Esophagus muscularis mucosa (tissue), 4 donors: ENCODE measurements at regions of chr5 and their contacts with region 1.

Region 1: GRCh38 chr5:67693956-67694809 is 497.6 kb upstream of the CD180 start:
- DNase-seq: peak; percentile 97
- H3K4me3 ChIP-seq: no peak overlapping the region
- H3K27ac ChIP-seq: peak overlapping the region; percentile 85 to 92 (median 87)
- H3K4me1 ChIP-seq: peaks cover 25 to 39% (median 34%) of the 10 kb centered on the region in 4 donors
- H3K27me3 ChIP-seq: no peaks in the 10 kb centered on the region
- CTCF ChIP-seq: no peak
- EP300 ChIP-seq: peak; percentile 99
- POLR2A ChIP-seq: no peak

Region 2: GRCh38 chr5:67268231-67269021 is 425.8 kb before region 1 on chr5:
- intact Hi-C with region 1: loop called (anchors 5 kb)
- DNase-seq: peak; percentile 95
- H3K4me3 ChIP-seq: peak overlapping the region; percentile 29 to 40 (median 33)
- H3K27ac ChIP-seq: peak overlapping the region; percentile 88 to 92 (median 90)
- H3K4me1 ChIP-seq: peaks cover 30 to 94% (median 89%) of the 10 kb centered on the region in 4 donors
- H3K27me3 ChIP-seq: no peaks in the 10 kb centered on the region
- CTCF ChIP-seq: no peak
- EP300 ChIP-seq: peak; percentile 91
- POLR2A ChIP-seq: no peak

Region 3: DNA sequence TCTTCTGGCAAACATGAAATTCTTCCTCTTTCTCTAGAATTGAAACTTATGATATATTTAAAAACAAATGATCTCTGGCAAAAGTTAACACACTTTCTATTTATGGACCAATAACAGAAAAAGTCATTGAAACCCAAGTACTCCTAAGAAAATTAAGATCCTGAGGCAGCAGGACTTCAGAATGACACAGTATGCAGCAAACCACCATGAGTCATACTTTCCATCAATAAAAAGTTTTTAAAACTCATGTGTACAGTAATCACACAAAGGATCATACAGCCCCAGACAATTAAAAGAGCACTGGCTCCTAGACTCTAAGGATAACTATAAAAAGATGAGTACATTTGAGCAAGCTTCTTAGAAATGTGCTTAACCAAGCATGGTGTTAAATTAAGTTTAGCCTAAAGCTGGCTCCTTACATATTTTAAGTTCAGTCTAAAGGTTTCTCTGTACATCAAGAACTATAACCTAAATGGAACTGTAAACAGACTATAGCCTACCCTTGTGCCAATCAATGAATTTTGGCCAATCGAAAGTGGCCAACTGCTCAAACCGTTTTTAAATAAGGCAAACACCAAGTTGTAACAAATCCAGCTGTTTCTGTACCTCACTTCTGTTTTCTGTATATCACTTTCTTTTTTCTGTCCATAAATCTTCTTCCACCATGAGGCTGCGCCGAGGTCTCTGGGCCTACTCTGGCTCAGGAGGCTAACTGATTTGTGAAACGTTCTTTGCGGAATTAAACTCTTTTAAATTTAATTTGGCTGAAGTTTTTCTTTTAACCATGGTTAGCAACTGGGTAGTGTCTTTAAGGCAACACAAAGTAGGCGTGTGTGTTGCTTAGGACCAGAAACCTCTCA is 289.3 kb after region 1 on chr5:
- intact Hi-C with region 1: loop called (anchors 10 kb)
- DNase-seq: no peak
- H3K4me3 ChIP-seq: no peak overlapping the region
- H3K27ac ChIP-seq: peak overlapping the region in 3 of 4 donors; percentile 36 to 42 (median 41)
- H3K4me1 ChIP-seq: peaks cover 4 to 49% (median 36%) of the 10 kb centered on the region in 4 donors
- H3K27me3 ChIP-seq: no peaks in the 10 kb centered on the region
- CTCF ChIP-seq: no peak
- EP300 ChIP-seq: no peak
- POLR2A ChIP-seq: no peak

Region 4: DNA sequence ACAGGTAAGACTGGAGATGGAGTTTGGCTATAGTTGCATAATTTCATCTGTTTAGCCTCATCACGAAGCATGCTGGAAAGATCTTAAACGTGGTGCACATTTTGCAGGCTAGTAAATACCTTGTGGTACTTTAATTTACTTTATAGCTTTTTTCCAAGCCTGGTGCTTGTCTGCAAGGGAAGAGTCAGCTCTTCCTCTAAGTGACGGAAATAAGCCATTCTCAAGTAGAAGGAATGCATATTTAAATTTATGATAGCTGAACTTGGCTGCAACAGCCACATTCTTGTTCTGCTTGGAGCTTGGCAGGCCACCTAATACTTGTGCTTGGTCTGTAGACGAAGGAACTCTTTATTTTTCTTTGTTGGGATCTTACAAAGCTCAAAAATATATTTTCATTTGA is 333.3 kb after region 1 on chr5:
- intact Hi-C with region 1: no loop called
- DNase-seq: no peak
- H3K4me3 ChIP-seq: no peak overlapping the region
- H3K27ac ChIP-seq: peak overlapping the region; percentile 66 to 80 (median 76)
- H3K4me1 ChIP-seq: peaks cover 28 to 53% (median 43%) of the 10 kb centered on the region in 4 donors
- H3K27me3 ChIP-seq: no peaks in the 10 kb centered on the region
- CTCF ChIP-seq: no peak
- EP300 ChIP-seq: peak; percentile 39
- POLR2A ChIP-seq: no peak

Region 5: GRCh38 chr5:68240202-68240601 is 546.0 kb after region 1 on chr5:
- intact Hi-C with region 1: loop called (anchors 10 kb)
- DNase-seq: no peak
- H3K4me3 ChIP-seq: peak overlapping the region in 2 of 4 donors; percentile 25 to 36
- H3K27ac ChIP-seq: peak overlapping the region; percentile 42 to 74 (median 64)
- H3K4me1 ChIP-seq: peaks cover 78 to 100% (median 99%) of the 10 kb centered on the region in 4 donors
- H3K27me3 ChIP-seq: no peaks in the 10 kb centered on the region
- CTCF ChIP-seq: no peak
- EP300 ChIP-seq: no peak
- POLR2A ChIP-seq: no peak